SK-N-SH (cell line): ENCODE measurements at regions of chr19 and their contacts with region 1.

Region 1: GRCh38 chr19:36060430-36060829 is 5.7 kb downstream of the WDR62 start:
- DNase-seq: peak; percentile 61
- H3K4me3 ChIP-seq: no peak overlapping the region; a peak in 1 of 4 replicates
- H3K27ac ChIP-seq: no peak overlapping the region
- H3K4me1 ChIP-seq: peaks cover 0 to 5% of the 10 kb centered on the region in 2 experiments; a peak in 1 of 4 replicates
- H3K27me3 ChIP-seq: no peaks in the 10 kb centered on the region
- CTCF ChIP-seq: peak; percentile 68
- EP300 ChIP-seq: no peak
- RAD21 ChIP-seq: peak; percentile 79

Region 2: GRCh38 chr19:35995048-35995993 is 65.1 kb before region 1 on chr19 and contains the start of gene SDHAF1:
- CTCF ChIA-PET with region 1: no interaction called
- POLR2A ChIA-PET with region 1: no interaction called
- DNase-seq: peak; percentile 97
- H3K4me3 ChIP-seq: peak within 1 kb of the TSS; percentile 83 to 90
- H3K27ac ChIP-seq: peak within 1 kb of the TSS; percentile 51 to 68; a peak in 3 of 4 replicates
- H3K4me1 ChIP-seq: peaks cover 11 to 18% of the 10 kb centered on the region in 2 experiments; a peak in 1 of 4 replicates
- H3K27me3 ChIP-seq: no peaks in the 10 kb centered on the region
- CTCF ChIP-seq: no peak
- EP300 ChIP-seq: no peak
- RAD21 ChIP-seq: no peak
- polyA plus RNA-seq, gene SDHAF1: 22.5 and 25.3 TPM in 2 replicates

Region 3: GRCh38 chr19:36103626-36104552 is 43.5 kb after region 1 on chr19:
- CTCF ChIA-PET with region 1: no interaction called
- POLR2A ChIA-PET with region 1: no interaction called
- DNase-seq: no peak
- H3K4me3 ChIP-seq: no peak overlapping the region
- H3K27ac ChIP-seq: no peak overlapping the region
- H3K4me1 ChIP-seq: no peaks in the 10 kb centered on the region
- H3K27me3 ChIP-seq: no peaks in the 10 kb centered on the region
- CTCF ChIP-seq: no peak
- EP300 ChIP-seq: no peak
- RAD21 ChIP-seq: no peak

Region 4: GRCh38 chr19:36120092-36120983 is 59.9 kb after region 1 on chr19:
- CTCF ChIA-PET with region 1: no interaction called
- POLR2A ChIA-PET with region 1: no interaction called
- DNase-seq: peak; percentile 30
- H3K4me3 ChIP-seq: no peak overlapping the region
- H3K27ac ChIP-seq: no peak overlapping the region
- H3K4me1 ChIP-seq: peaks cover 6 to 10% of the 10 kb centered on the region in 2 experiments; a peak in 1 of 4 replicates
- H3K27me3 ChIP-seq: no peaks in the 10 kb centered on the region
- CTCF ChIP-seq: no peak
- EP300 ChIP-seq: no peak
- RAD21 ChIP-seq: no peak

Region 5: GRCh38 chr19:36169084-36169760 is 108.8 kb after region 1 on chr19:
- CTCF ChIA-PET with region 1: interaction called, 10 read pairs
- POLR2A ChIA-PET with region 1: no interaction called
- DNase-seq: no peak
- H3K4me3 ChIP-seq: no peak overlapping the region
- H3K27ac ChIP-seq: peak overlapping the region in 1 of 2 experiments; percentile 24; a peak in 1 of 4 replicates
- H3K4me1 ChIP-seq: peaks cover 4 to 5% of the 10 kb centered on the region in 2 experiments; a peak in 2 of 4 replicates
- H3K27me3 ChIP-seq: no peaks in the 10 kb centered on the region
- CTCF ChIP-seq: no peak
- EP300 ChIP-seq: no peak
- RAD21 ChIP-seq: no peak